ENCODE measurements at regions of chr10 and their contacts with region 1.

Region 1: DNA sequence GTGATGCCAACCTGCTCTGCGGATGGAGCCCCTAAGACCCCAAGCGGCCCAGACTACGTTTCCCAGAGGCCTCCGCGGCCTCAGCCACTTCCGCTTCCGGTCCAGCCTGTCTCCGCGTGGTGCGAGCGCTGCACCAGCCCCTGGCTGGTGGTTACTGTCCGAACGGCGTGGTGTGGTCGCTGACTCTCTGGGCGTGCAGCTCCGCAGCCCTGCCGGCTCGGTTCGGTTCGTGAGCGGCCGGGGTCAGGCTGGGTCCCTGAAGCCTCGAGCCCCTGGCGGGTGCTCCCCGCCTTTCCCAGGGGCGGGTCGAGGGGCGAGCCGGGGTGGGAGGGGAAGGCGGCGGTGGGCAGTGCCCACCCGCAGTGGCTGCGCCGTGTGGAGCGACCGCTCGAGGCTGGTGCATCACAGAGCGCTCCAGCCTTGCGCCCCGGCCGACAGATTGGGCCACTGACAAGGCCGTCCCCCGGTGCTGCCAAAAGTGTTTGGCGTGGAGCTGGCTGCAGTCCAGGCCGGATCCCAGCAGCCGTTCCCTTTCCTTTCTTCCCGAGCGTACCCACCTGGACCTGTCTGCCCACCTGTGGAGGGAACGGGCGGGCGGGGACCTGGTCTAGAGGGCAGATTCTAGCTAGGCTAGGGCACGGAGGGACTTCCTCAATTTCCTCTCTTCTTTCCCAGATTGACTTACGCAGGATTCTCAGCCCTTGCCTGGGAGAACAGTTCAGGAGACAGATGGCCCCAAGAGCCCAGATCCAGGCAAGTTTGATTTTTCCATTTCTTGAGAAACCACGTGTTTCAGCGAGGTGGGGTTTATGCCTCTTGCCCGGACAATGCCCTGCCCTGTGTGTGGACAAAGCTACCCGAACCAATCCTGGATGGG is at the start of gene ZNF485:
- DNase-seq: peak; percentile 41 to 80 (median 58)
- ATAC-seq: peak; percentile 91 to 96
- H3K4me3 Mint-ChIP-seq: peak within 1 kb of the TSS; percentile 76 to 90 (median 85)
- H3K27ac Mint-ChIP-seq: peak within 1 kb of the TSS; percentile 39 to 94 (median 86)
- H3K4me1 Mint-ChIP-seq: peaks cover 17 to 38% (median 34%) of the 10 kb centered on the region in 4 donors
- H3K27me3 Mint-ChIP-seq: peaks cover 0 to 4% (median 0%) of the 10 kb centered on the region in 5 donors
- polyA plus RNA-seq, gene ZNF485: 4.5 to 6.8 (median 5.9) TPM

Region 2: DNA sequence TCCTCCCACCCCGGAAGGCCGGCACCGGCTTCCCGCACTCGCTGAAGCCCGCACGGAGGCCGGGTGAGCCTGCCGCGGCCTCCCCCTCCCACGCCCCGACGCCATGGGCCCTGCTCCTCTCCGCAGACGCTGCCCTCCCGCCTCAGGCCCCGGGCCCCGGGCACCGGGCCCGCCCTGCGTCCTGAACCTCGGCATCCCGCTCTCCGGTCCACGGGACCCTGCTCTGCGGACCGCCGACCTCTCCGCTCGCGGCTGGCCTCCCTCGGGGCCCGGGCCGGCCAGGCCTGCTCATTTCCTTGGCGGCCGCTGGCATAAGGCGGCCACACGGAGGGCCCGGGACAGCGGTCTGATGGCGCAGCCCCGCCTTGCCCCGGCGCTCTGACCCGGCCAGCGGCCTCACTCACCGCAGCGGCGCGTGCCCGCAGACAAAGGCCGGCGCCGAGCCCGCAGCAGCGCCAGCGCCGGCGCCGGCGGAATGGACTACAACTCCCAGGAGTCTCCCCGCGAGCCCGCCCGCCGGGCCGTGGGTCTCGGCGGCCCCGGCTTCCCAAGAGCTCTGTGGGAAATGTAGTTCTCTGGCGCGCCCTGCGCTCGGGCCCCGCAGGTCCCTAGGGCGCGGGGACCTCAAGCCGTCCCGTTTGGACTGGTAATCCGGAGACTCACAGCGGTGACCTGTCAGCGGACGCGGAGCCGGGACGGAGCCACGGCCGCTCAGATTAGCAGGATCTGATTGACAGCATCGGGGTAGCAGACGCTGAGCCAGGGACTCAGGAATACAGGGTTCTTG is 42.0 kb after region 1 on chr10 and contains the start of gene ZNF32:
- POLR2A ChIA-PET with region 1: interaction called, 10 read pairs
- DNase-seq: peak; percentile 69 to 85 (median 78)
- ATAC-seq: peak; percentile 96 to 97
- H3K4me3 Mint-ChIP-seq: peak within 1 kb of the TSS; percentile 91 to 97 (median 97)
- H3K27ac Mint-ChIP-seq: peak within 1 kb of the TSS; percentile 67 to 98 (median 94)
- H3K4me1 Mint-ChIP-seq: peaks cover 10 to 27% (median 20%) of the 10 kb centered on the region in 4 donors
- H3K27me3 Mint-ChIP-seq: peaks cover 0 to 5% (median under 1%) of the 10 kb centered on the region in 5 donors
- polyA plus RNA-seq, gene ZNF32: 79.1 to 98.2 (median 94.8) TPM

Region 3: GRCh38 chr10:43816351-43817321 is 210.1 kb after region 1 on chr10:
- POLR2A ChIA-PET with region 1: no interaction called
- DNase-seq: peak; percentile 19 to 81 (median 60)
- ATAC-seq: peak; percentile 99 to 100
- H3K4me3 Mint-ChIP-seq: peak overlapping the region; percentile 47 to 84 (median 71)
- H3K27ac Mint-ChIP-seq: peak overlapping the region; percentile 41 to 95 (median 79)
- H3K4me1 Mint-ChIP-seq: peaks cover 27 to 46% (median 38%) of the 10 kb centered on the region in 4 donors
- H3K27me3 Mint-ChIP-seq: no peaks in the 10 kb centered on the region